ENCODE measurements at regions of chr22 and their contacts with region 1.

Region 1: GRCh38 chr22:37077884-37078485 is 26.4 kb downstream of the KCTD17 start:
- DNase-seq: peak; percentile 61 to 84
- H3K4me3 ChIP-seq: no peak overlapping the region
- H3K4me3 Mint-ChIP-seq: no peak overlapping the region
- H3K27ac Mint-ChIP-seq: no peak overlapping the region
- H3K4me1 ChIP-seq: no peaks in the 10 kb centered on the region
- H3K4me1 Mint-ChIP-seq: no peaks in the 10 kb centered on the region
- H3K27me3 ChIP-seq: peaks cover 2% of the 10 kb centered on the region; the same call in 1 of the 2 replicates
- H3K27me3 Mint-ChIP-seq: peaks cover 16% of the 10 kb centered on the region
- CTCF ChIP-seq: peak; percentile 93 to 97

Region 2: GRCh38 chr22:37148742-37149665 is 71.0 kb after region 1 on chr22:
- CTCF ChIA-PET with region 1: no interaction called
- POLR2A ChIA-PET with region 1: no interaction called
- intact Hi-C with region 1: loop called (anchors 5 kb)
- DNase-seq: no peak
- H3K4me3 ChIP-seq: no peak overlapping the region
- H3K4me3 Mint-ChIP-seq: no peak overlapping the region
- H3K27ac Mint-ChIP-seq: no peak overlapping the region
- H3K4me1 ChIP-seq: peaks cover 6% of the 10 kb centered on the region; the same call in 1 of the 2 replicates
- H3K4me1 Mint-ChIP-seq: peaks cover 12% of the 10 kb centered on the region
- H3K27me3 ChIP-seq: no peaks in the 10 kb centered on the region
- H3K27me3 Mint-ChIP-seq: no peaks in the 10 kb centered on the region
- CTCF ChIP-seq: no peak

Region 3: GRCh38 chr22:37199103-37199759 is 121.2 kb after region 1 on chr22:
- CTCF ChIA-PET with region 1: interaction called, 5 read pairs
- POLR2A ChIA-PET with region 1: no interaction called
- intact Hi-C with region 1: loop called (anchors 2 kb)
- DNase-seq: peak; percentile 97 to 99
- H3K4me3 ChIP-seq: peak overlapping the region; percentile 68
- H3K4me3 Mint-ChIP-seq: peak overlapping the region; percentile 90
- H3K27ac Mint-ChIP-seq: peak overlapping the region; percentile 59
- H3K4me1 ChIP-seq: peaks cover 48% of the 10 kb centered on the region
- H3K4me1 Mint-ChIP-seq: peaks cover 26% of the 10 kb centered on the region
- H3K27me3 ChIP-seq: no peaks in the 10 kb centered on the region; the same call in 1 of the 2 replicates
- H3K27me3 Mint-ChIP-seq: no peaks in the 10 kb centered on the region
- CTCF ChIP-seq: peak; percentile 89 to 95

Region 4: GRCh38 chr22:37260901-37261336 is 182.9 kb after region 1 on chr22:
- CTCF ChIA-PET with region 1: no interaction called
- POLR2A ChIA-PET with region 1: no interaction called
- intact Hi-C with region 1: no loop called
- DNase-seq: peak; percentile 65 to 67
- H3K4me3 ChIP-seq: no peak overlapping the region
- H3K4me3 Mint-ChIP-seq: no peak overlapping the region
- H3K27ac Mint-ChIP-seq: no peak overlapping the region
- H3K4me1 ChIP-seq: no peaks in the 10 kb centered on the region
- H3K4me1 Mint-ChIP-seq: no peaks in the 10 kb centered on the region
- H3K27me3 ChIP-seq: no peaks in the 10 kb centered on the region; the same call in 1 of the 2 replicates
- H3K27me3 Mint-ChIP-seq: peaks cover 6% of the 10 kb centered on the region
- CTCF ChIP-seq: peak; percentile 85 to 90

Measured in Caco-2 (cell line).